ENCODE measurements at regions of chr2 and their contacts with region 1.

Region 1: DNA sequence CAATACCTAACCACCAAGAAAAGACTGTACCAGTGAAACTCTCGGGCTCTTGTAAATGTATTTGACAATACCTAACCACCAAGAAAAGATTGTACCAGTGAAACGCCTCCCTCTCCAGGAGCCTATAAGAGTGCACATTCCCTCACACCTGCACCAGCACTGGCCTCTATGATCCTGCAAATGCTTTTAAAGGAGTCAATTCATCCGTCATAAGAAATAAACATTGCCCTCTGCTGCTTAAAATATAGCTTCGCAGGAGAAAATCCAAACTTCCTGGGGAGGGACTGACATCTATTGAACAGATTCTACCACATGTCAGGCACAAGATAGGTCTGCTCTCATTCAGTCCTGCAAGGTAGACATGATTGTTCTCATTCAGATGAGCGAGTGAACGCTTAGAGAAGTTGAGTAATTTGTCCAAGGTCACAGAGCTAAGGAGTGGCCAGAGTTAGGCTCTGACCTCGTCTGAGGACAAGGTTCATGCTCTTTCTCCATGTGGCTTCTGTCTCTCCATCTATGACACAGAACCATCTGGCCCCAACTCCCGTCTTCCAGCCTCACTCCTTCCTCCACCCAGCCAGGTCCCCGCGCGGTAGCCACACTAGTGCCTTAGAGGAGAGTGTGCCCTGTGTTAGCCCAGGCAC is 38.7 kb downstream of the MCFD2 start:
- DNase-seq: no peak
- ATAC-seq: peak; percentile 69

Region 2: GRCh38 chr2:46690825-46691224 is 186.0 kb before region 1 on chr2:
- intact Hi-C with region 1: no loop called
- DNase-seq: no peak
- ATAC-seq: no peak

Region 3: GRCh38 chr2:46803911-46804670 is 72.8 kb before region 1 on chr2:
- intact Hi-C with region 1: loop called (anchors 5 kb)
- DNase-seq: no peak
- ATAC-seq: no peak

Measured in Right ventricle myocardium superior (tissue), 1 donor.